ENCODE measurements at regions of chr17 and their contacts with region 1.

Region 1: DNA sequence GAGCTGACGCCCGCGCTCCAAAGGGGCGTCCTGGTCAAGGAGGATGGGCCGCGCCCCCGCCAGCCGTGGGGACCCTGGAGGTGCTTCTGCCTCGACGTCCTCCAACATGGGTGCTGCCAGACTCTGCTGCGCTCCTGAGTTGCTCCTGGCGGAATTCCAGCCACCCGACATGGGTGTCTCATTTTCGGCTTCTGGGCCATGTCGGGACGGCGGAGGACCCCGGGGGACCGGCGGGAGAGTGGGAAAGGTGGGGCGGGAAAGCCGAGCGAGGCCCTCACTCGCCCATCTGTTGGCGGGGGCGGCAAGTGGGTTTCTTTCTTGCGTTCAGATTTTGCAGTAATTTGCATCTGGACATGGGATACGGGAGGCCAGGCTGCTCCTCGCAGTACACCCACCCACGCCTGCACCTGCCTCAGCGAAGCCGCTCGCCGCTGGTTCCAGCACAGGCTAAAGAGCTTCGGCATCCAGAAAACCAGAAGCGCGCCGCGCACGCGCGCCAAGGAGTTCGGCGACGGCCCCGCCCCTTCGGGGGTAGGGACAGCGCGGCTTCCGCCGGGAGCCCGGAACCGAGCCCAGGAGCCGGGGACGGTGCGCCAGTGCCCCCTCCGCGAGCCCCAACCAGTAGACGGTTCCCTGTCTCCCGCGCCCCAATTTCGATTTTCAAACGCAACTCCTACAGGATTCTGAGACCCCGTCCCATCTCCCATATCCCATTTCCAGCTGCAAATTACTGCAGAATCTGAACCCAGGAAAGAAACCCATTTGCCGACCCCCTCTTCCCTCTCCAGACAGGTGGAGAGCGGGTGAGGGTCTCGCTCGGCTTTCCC is at the start of gene ARMC7:
- DNase-seq: no peak
- H3K4me3 ChIP-seq: peak within 1 kb of the TSS; percentile 79
- CTCF ChIP-seq: no peak

Region 2: DNA sequence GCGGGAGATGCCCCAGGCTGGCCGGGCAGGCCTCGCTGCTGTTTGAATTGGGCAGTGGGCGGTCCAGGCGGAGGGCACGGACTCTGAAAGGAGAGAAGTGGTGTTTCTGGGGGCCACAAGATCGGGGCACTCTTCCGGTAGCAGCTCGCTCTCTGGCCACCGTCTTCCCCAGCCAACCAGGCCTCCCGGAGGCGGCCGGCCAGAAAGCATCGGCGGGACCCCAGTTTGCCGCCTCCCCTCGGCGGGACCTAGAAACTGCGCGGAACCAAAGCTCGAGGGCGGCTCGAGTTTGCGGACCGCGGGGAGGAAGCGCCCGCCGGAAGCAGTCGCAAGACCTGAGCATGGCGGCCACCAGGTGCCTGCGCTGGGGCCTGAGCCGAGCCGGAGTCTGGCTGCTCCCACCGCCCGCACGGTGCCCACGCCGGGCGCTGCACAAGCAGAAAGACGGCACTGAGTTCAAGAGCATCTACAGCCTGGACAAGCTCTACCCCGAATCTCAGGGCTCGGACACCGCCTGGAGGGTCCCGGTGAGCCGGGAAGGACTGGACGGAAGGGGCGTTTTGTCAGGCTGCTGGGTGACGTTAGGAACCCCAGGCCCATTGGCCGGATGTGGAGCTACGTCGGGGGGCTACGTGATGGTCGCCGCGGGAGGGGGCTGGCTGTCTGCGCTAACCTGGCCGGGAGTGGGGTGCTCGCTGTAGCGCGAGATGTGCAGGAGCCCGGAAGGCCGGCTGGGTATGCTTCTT is 97.1 kb before region 1 on chr17 and contains the start of gene MRPL58:
- CTCF ChIA-PET with region 1: interaction called, 15 read pairs
- POLR2A ChIA-PET with region 1: no interaction called
- DNase-seq: no peak
- H3K4me3 ChIP-seq: peak within 1 kb of the TSS; percentile 86
- CTCF ChIP-seq: peak; percentile 70

Region 3: GRCh38 chr17:75077496-75078283 is 31.9 kb before region 1 on chr17:
- CTCF ChIA-PET with region 1: interaction called, 18 read pairs
- POLR2A ChIA-PET with region 1: no interaction called
- DNase-seq: no peak
- H3K4me3 ChIP-seq: no peak overlapping the region
- CTCF ChIP-seq: peak; percentile 8

Region 4: DNA sequence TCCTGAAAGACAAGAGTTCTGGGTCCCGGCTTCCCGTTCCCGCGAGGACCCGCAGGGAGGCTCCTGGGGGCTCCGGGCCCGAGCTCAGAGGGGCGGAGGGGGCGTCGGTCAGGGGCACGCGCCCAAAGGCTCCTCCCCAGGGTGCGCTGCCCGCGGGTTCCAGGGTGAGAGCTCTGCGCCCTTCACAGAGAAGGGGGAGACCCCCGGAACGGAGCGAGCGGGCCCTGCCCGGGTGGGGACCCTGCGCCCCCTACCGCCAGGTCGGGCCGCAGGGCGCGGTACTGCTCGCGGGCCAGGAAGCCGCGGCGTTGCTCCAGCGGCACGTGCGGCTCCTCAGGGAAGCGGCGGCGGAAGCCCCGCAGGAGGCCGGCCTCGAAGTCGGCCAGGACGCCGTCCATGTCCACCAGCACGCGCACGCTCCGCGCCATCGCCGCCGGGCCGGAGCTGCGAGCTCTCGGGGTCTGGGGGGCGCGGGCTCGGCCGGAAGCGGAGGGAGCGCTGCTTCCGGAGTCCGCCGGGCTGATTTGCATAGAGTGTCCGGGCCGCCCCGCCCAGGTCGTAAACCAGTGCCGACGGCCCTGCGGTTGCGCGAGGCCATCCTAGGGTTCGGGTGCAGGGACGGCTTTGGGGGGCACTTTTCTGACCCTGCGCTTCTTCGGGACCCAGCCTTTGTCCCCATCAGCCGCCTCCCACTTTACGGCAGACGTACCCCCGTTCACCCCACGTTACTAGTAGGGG is 21.8 kb after region 1 on chr17 and contains the start of gene NT5C:
- CTCF ChIA-PET with region 1: interaction called, 142 read pairs
- POLR2A ChIA-PET with region 1: interaction called, 8 read pairs
- DNase-seq: no peak
- H3K4me3 ChIP-seq: peak within 1 kb of the TSS; percentile 73
- CTCF ChIP-seq: peak; percentile 81

Region 5: GRCh38 chr17:75181608-75182318 is 72.1 kb after region 1 on chr17:
- CTCF ChIA-PET with region 1: interaction called, 12 read pairs
- POLR2A ChIA-PET with region 1: no interaction called
- DNase-seq: no peak
- H3K4me3 ChIP-seq: peak overlapping the region; percentile 93
- CTCF ChIP-seq: no peak

Region 6: GRCh38 chr17:75238684-75239191 is 129.1 kb after region 1 on chr17:
- CTCF ChIA-PET with region 1: interaction called, 37 read pairs
- POLR2A ChIA-PET with region 1: interaction called, 5 read pairs
- DNase-seq: no peak
- H3K4me3 ChIP-seq: no peak overlapping the region
- CTCF ChIP-seq: peak; percentile 89